ENCODE measurements at regions of chr11 and their contacts with region 1.

Region 1: GRCh38 chr11:65134386-65135253 is at the start of gene SYVN1:
- DNase-seq: peak; percentile 75 to 94
- H3K4me3 ChIP-seq: peak within 1 kb of the TSS; percentile 84 to 94 (median 88)
- H3K27ac ChIP-seq: peak within 1 kb of the TSS; percentile 99
- H3K4me1 ChIP-seq: peaks cover 0 to 13% (median 7%) of the 10 kb centered on the region in 4 experiments; a peak in 6 of 7 replicates
- H3K27me3 ChIP-seq: no peaks in the 10 kb centered on the region
- CTCF ChIP-seq: no peak
- EP300 ChIP-seq: peak in 1 of 2 experiments; percentile 97; a peak in 2 of 3 replicates
- POLR2A ChIP-seq: peak in 1 of 2 experiments; percentile 96; a peak in 1 of 3 replicates
- RAD21 ChIP-seq: no peak
- total RNA-seq, gene SYVN1: 29.4 and 34.0 TPM in 2 replicates

Region 2: DNA sequence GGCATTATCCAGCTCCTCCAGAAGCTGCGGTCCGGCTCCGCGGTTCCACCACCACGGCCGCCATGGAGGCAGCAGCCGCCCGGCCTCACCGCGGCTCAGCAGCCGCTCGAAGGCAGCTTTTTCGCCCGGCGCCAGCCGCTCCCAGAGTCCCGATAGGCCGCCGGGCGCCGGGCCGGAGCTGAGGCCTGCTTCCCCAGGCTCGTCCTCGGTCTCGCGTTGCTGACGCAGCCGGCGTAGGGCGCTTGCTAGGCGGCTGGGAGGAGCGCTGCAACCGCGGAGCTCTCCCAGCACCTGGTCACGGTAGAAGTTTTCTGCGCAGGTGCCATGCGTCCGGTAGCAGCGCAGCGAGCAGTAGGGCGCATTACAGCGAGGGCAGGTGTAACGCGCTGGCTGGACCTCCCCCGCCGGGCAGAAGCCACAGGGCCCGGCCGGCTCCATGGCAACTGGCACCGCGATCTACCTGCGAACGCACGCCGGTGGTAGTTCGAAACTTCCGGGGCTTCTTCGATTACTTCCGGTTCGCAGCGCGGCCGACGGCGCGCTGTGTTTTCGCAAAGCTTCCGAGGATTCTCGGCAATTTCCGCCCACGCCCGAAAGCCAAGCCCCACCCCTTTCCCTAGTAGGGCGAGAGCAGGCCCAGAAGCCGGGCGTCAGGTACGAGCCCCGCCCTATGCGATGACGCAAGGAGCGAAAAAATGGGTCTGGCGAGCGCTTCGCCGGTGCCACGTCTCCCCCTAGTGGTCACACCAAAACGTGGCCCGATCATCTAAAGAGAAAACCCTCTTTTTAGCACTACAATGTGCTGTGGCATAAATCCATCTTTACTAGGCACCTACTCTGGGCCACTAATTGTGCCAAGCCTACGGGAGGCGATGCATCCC is 17.2 kb before region 1 on chr11 and contains the start of gene ZNHIT2:
- CTCF ChIA-PET with region 1: interaction called, 71 read pairs
- POLR2A ChIA-PET with region 1: interaction called, 305 read pairs
- DNase-seq: peak; percentile 98 to 99
- H3K4me3 ChIP-seq: peak within 1 kb of the TSS; percentile 61 to 83 (median 72)
- H3K27ac ChIP-seq: peak within 1 kb of the TSS; percentile 78
- H3K4me1 ChIP-seq: peaks cover 2 to 22% (median 13%) of the 10 kb centered on the region in 4 experiments
- H3K27me3 ChIP-seq: no peaks in the 10 kb centered on the region
- CTCF ChIP-seq: peak in 2 of 3 experiments; percentile 79 to 92; a peak in 3 of 4 replicates
- EP300 ChIP-seq: peak in 1 of 2 experiments; percentile 75; a peak in 1 of 3 replicates
- POLR2A ChIP-seq: peak in 1 of 2 experiments; percentile 89; a peak in 2 of 3 replicates
- RAD21 ChIP-seq: peak; percentile 76 to 80
- total RNA-seq, gene ZNHIT2: 13.0 and 14.8 TPM in 2 replicates

Region 3: GRCh38 chr11:65150509-65151271 is 16.1 kb after region 1 on chr11:
- CTCF ChIA-PET with region 1: interaction called, 14 read pairs
- POLR2A ChIA-PET with region 1: interaction called, 11 read pairs
- DNase-seq: no peak
- H3K4me3 ChIP-seq: no peak overlapping the region
- H3K27ac ChIP-seq: no peak overlapping the region
- H3K4me1 ChIP-seq: no peaks in the 10 kb centered on the region
- H3K27me3 ChIP-seq: no peaks in the 10 kb centered on the region
- CTCF ChIP-seq: no peak
- EP300 ChIP-seq: no peak
- POLR2A ChIP-seq: no peak
- RAD21 ChIP-seq: no peak

Region 4: DNA sequence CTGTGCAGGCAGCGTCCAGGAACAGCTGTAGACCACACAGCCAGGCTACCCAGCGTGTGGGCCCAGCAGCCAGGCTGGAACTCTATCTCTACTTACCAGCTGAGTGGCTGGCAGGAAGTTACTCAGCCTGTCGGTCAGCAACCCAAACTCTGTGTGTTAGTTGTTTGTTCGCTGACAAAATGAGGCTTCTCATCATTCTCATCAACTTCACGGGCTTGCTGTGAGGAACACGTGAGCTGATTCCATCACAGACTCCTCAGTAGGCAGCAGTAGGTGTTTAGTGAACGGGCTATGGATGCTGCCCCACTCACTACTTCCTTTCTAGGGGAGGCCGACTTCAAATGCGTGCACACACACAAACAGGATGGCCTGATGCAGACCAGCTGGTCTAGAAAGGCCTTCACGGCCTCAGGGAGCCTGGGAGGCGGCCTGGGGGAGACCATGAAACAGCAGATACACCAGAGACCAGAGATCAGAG is 34.6 kb after region 1 on chr11:
- CTCF ChIA-PET with region 1: interaction called, 4 read pairs
- POLR2A ChIA-PET with region 1: interaction called, 20 read pairs
- DNase-seq: no peak
- H3K4me3 ChIP-seq: no peak overlapping the region
- H3K27ac ChIP-seq: no peak overlapping the region
- H3K4me1 ChIP-seq: peaks cover 0 to 6% (median 1%) of the 10 kb centered on the region in 4 experiments; a peak in 2 of 7 replicates
- H3K27me3 ChIP-seq: no peaks in the 10 kb centered on the region
- CTCF ChIP-seq: no peak
- EP300 ChIP-seq: no peak
- POLR2A ChIP-seq: no peak
- RAD21 ChIP-seq: no peak

Measured in H1 (cell line).